ENCODE measurements at regions of chr6 and their contacts with region 1.

Region 1: DNA sequence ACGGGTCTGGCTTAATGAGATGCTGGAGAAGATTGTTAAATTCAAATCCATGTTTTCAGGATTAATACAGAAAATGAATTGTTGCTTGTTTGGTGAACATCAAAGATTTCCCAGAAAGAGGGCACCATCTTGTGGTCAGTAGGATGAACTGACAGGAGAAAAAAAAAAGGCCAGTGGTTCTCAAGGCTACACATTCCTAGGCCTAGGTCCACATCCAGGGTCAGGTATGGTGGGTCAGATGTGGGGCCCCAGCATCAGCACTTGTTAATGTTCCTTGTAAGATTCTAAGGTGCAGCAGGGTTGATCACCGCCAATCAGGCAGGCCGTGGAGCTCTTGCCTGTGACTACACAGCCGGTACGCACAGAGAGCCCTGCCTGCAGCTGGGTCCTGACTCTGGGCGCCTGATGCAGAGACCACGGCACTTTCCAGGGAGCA is 34.0 kb upstream of the FOXO3 start:
- DNase-seq: peak in 1 of 7 donors; percentile 8
- H3K4me3 ChIP-seq: no peak overlapping the region
- H3K27ac ChIP-seq: no peak overlapping the region
- H3K4me1 ChIP-seq: no peaks in the 10 kb centered on the region
- H3K27me3 ChIP-seq: no peaks in the 10 kb centered on the region
- CTCF ChIP-seq: peak; percentile 68 to 89 (median 84)
- POLR2A ChIP-seq: no peak

Region 2: DNA sequence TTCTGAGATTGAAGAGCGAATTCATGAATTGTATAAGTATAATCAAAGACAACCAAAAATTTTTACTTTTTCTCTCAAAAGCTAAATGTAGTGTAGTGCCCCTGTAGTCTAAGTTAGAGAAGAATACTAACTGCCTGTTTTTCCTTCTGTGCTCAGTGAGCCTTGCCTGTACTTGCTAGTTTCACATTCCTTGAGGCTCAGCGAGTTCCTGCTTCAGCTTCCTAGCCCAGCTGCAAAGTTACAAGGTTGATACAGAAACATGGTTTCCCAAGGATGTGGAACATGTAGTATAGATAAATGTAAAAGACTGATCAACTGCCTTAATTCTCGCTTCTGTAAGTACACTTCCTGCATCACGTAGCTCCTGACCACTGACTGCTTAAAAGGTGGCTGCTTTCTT is 535.7 kb before region 1 on chr6:
- intact Hi-C with region 1: loop called (anchors 10 kb)
- DNase-seq: no peak
- H3K4me3 ChIP-seq: no peak overlapping the region
- H3K27ac ChIP-seq: no peak overlapping the region
- H3K4me1 ChIP-seq: peaks cover 4 to 6% of the 10 kb centered on the region in 2 donors
- H3K27me3 ChIP-seq: no peaks in the 10 kb centered on the region
- CTCF ChIP-seq: no peak
- POLR2A ChIP-seq: no peak